AG04449 (cell line): ENCODE measurements at regions of chr9 and their contacts with region 1.

Region 1: DNA sequence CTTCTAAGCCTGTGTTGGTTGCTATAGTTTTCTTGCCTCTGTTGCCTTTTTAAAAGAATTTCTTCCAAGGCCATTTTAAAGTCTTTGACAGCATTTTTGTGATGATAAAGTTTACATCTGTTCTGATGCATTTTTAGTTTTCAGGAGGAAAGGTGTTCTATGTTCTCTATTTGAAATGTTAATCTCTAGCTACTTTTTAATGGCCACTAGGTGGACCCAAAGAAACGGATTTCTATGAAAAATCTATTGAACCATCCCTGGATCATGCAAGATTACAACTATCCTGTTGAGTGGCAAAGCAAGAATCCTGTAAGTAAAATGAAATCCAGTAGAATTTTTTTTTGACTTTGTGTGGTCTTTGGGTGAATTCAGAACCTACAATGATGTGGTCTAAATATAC is 60.2 kb downstream of the MELK start:
- DNase-seq: no peak
- H3K4me3 ChIP-seq: no peak overlapping the region
- CTCF ChIP-seq: peak; percentile 31

Region 2: DNA sequence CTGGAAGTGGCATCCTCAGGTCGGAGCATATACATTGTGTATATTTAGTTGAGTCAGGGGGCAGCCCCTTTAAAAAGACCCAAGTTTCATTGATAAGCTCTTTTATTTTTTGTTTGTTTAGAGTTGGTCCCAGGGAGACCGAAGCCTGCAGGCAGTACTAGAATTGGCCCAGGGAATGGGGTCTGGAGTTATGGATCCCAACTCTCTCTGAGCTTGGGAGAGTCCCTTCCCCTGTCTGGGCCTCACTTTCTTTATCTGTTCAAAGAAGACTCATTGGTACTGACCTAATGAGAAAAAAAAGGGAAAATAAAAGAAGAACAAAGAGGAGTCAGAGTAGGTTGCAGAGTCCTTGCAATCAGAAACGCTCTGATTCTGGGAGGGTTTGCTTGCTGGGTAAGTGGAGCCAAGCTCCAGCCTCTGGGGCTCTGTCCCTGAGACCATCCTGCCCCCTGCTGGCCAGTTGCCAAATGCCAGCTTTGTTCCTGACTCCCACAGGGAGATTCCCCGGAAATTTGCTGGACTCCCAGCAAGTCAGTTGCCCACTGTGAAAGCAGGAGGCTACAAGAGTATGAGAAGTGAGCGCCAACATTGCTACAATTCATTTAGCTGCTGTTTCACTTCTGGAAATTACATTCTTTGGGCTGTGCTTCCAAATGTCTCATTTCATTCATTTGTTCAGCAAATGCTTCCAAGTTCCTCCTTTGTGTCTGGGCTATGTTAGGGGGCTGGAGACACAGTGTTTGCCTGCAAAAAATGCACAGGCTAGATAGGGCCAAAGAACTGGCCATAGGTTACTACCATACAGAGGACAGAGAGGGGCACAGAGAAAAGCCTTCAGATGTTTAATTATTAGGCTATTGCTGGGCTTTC is 96.0 kb after region 1 on chr9:
- CTCF ChIA-PET with region 1: interaction called, 51 read pairs
- POLR2A ChIA-PET with region 1: no interaction called
- DNase-seq: peak; percentile 23
- H3K4me3 ChIP-seq: no peak overlapping the region
- CTCF ChIP-seq: peak; percentile 79